ENCODE measurements at regions of chr4 and their contacts with region 1.

Region 1: DNA sequence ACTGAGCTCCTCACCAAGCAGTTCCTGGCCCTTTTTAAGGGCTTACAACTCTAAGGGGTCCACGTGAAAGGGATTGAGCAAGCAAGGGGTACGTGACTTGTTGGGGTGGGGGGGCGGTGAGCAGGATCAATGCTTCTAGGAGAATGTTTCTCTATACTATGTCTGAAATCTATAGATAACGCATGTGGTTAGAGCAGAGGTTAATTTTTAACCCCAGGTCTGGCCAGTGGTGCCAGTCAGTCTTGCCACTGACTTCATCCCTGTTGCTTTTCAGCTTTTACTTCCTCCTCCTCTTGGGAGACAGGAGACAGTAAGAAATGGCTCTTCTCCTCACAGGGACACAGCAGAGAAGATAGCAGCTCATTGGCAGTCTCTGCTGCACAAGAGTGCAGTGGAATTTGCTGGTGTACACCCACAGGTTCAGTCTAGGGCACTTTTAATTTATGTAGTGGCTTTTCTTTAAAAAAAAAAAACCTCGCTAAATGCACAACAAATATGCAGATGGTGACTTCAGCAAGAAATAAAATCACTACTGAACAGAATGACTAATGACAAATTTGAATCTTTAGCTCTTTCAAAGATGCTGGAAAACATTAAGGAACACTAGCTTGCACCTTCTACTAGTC is 190.4 kb downstream of the CCNG2 start:
- DNase-seq: no peak
- CTCF ChIP-seq: no peak

Region 2: GRCh38 chr4:76654791-76655190 is 692.7 kb before region 1 on chr4:
- CTCF ChIA-PET with region 1: no interaction called
- POLR2A ChIA-PET with region 1: no interaction called
- DNase-seq: no peak
- CTCF ChIP-seq: no peak

Region 3: DNA sequence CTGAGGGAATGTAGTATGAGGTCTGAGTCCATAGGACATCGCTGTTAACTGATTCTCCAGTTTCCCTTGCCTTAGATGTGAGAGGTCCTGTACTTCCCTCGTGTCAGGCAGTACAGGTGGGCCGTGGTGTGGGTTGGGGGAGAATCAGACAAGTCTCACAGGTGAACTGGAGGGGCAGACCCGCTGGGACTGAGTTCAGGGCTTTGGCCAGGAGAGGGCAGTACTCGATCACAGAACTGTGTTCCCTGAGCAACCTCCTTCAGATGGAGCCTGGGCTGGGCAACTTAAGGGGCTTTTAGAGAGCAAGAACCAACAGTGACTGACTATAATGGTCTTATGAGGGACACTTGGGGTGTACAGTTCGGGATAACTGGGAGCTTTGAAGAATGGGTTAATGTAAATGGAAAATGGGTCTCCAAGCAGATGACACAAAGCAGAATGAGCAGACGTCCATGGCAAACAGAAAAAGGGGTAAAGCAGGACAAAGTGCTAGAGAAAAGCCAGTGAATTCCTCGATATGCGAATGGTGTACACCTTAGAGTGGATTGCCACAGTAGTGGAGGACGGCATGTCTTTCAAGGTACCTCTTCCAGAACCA is 106.9 kb before region 1 on chr4:
- CTCF ChIA-PET with region 1: interaction called, 60 read pairs
- POLR2A ChIA-PET with region 1: no interaction called
- DNase-seq: peak; percentile 63
- CTCF ChIP-seq: peak; percentile 87

Measured in GM10248 (cell line).